Activated naive CD4-positive, alpha-beta T cell treated with anti-CD3 and anti-CD28 coated beads for 36 hours (primary cell): ENCODE measurements at regions of chr20 and their contacts with region 1.

Region 1: DNA sequence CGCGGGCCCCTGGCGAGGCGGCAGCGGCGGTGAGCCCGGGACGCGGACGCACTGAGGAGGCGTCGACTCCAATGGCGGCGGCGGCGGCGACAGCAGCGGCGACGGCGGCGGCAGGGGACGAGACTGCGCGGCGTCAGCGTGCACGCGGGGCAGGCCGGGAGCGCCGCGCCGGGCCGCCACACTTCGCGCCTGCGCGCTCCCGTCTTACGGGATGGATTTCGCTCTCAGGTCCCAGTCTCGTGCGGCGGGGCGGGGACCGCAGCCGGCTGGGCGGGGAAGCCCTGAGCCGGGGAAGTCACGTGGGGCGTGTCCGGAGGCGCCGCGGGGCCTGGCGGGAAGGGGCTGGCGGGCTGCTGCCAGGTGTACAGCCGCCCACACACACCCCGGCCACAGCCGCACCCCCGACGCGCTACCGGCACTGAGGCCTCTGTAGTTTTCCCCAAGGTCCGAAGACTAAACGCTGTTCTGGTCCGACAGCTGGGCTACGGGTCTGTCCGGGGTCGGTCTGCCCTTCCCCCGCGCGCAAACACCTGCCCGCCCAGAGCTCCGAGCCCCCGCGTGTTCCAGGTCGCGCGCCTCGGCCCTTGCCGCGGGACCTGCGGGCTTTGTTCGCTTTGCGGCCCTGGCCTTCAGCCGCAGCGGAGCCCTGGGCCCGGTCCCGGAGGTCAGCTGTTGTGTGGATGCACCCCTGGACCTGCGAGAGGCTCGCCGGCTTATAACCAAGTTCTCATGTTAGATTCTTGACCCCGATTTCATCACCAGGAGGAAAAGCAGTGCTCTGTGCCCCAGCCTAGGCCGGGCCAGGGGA is at the start of gene YTHDF1:
- DNase-seq: peak; percentile 97
- H3K4me3 Mint-ChIP-seq: peak within 1 kb of the TSS; percentile 94
- H3K27ac Mint-ChIP-seq: peak within 1 kb of the TSS; percentile 87
- H3K4me1 Mint-ChIP-seq: peaks cover 47% of the 10 kb centered on the region
- H3K27me3 Mint-ChIP-seq: no peaks in the 10 kb centered on the region
- total RNA-seq, gene YTHDF1: 27.6 to 27.8 TPM

Region 2: DNA sequence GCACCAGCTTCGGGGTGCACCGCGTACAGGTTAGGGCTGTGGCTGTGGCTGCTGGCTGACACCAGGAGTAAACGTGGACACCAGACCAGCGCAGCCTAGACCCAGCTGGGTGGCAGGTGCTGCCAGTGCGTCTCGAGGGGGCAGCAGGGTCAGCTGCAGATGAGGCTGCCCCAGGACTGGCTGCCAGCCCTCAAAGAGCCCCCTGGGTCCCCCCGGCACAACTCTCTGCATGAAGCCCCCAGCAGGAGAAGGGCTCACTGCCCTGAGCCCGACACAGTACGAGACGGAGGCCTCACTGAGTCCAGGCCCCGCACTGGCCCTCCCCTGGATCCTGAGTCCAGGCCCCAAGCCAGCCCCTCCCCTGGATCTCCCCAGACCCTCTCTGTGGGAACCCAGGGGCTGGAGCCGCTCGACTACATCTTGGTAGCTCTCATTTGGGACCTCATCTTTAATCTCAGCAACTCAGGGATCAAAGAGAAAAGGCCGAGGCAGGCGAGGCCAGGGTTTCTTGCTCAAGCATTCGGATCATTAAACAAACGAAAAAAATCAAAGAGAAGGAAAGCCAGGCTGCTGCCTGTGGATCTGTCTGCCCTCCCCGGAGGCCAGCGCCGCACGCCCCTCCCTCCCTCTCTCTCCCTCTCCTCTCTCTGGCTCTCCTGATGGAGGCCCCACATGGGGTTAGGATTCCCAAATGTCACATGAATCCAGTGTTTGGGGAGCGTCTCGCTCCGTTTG is 45.0 kb after region 1 on chr20:
- CTCF ChIA-PET with region 1: no interaction called
- intact Hi-C with region 1: no loop called
- DNase-seq: no peak
- H3K4me3 Mint-ChIP-seq: no peak overlapping the region
- H3K27ac Mint-ChIP-seq: no peak overlapping the region
- H3K4me1 Mint-ChIP-seq: peaks cover 3% of the 10 kb centered on the region
- H3K27me3 Mint-ChIP-seq: peaks cover 15% of the 10 kb centered on the region

Region 3: GRCh38 chr20:63272584-63273579 is 56.6 kb after region 1 on chr20 and contains the start of gene ARFGAP1:
- CTCF ChIA-PET with region 1: no interaction called
- intact Hi-C with region 1: loop called (anchors 1 kb)
- DNase-seq: peak; percentile 91
- H3K4me3 Mint-ChIP-seq: peak within 1 kb of the TSS; percentile 86
- H3K27ac Mint-ChIP-seq: peak within 1 kb of the TSS; percentile 78
- H3K4me1 Mint-ChIP-seq: peaks cover 26% of the 10 kb centered on the region
- H3K27me3 Mint-ChIP-seq: no peaks in the 10 kb centered on the region
- total RNA-seq, gene ARFGAP1: 82.4 to 89.4 TPM

Region 4: GRCh38 chr20:63574156-63574828 is 358.0 kb after region 1 on chr20 and contains the start of gene HELZ2:
- CTCF ChIA-PET with region 1: no interaction called
- intact Hi-C with region 1: no loop called
- DNase-seq: peak; percentile 73
- H3K4me3 Mint-ChIP-seq: peak within 1 kb of the TSS; percentile 73
- H3K27ac Mint-ChIP-seq: no peak within 1 kb of the TSS
- H3K4me1 Mint-ChIP-seq: peaks cover 3% of the 10 kb centered on the region
- H3K27me3 Mint-ChIP-seq: no peaks in the 10 kb centered on the region
- total RNA-seq, gene HELZ2: 20.0 to 20.4 TPM